CD8-positive, alpha-beta memory T cell (primary cell): ENCODE measurements at regions of chr16 and their contacts with region 1.

Region 1: DNA sequence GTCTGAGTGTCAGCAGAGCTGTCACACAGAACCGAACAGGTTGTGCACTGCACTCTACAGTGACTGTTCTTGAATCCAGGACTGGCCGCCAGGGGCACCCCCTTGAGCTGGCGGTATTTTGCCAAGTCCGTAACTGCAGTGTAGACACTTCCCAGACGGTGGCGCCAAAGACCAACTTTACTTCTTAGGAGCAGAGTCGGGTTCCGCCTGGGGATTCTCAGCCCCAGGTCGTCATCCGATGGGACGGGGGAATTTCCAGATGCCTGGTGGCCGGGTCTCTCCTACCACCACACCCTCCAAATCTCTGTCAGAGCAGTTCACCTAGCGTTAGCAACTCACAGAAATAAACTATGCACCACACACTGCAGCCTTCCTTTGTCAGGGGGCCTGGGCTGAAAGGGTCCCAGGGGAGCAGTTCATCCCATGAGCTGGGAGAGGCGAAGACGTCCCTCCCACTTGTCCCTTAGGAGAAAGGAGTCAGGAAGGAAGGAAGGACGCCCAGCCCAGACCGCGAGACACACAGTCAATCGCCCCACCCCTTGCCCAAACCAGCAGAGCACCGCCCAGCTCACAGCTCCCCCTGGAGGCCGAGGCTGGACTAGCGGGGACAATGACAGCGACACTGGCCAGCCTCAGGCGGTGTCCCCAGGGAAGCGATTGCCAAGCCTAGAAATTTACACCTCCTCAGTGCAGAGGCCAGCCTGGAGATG is 7.4 kb upstream of the RIPOR1 start:
- DNase-seq: peak; percentile 91 to 98 (median 96)
- H3K4me3 ChIP-seq: peak overlapping the region; percentile 91
- H3K4me3 Mint-ChIP-seq: peak overlapping the region; percentile 90 to 97 (median 93)
- H3K27ac ChIP-seq: peak overlapping the region; percentile 86
- H3K27ac Mint-ChIP-seq: peak overlapping the region; percentile 97 to 100 (median 99)
- H3K4me1 ChIP-seq: peaks cover 11% of the 10 kb centered on the region
- H3K4me1 Mint-ChIP-seq: peaks cover 16 to 18% (median 17%) of the 10 kb centered on the region in 3 donors
- H3K27me3 ChIP-seq: no peaks in the 10 kb centered on the region
- H3K27me3 Mint-ChIP-seq: peaks cover 0 to 4% of the 10 kb centered on the region in 2 donors

Region 2: DNA sequence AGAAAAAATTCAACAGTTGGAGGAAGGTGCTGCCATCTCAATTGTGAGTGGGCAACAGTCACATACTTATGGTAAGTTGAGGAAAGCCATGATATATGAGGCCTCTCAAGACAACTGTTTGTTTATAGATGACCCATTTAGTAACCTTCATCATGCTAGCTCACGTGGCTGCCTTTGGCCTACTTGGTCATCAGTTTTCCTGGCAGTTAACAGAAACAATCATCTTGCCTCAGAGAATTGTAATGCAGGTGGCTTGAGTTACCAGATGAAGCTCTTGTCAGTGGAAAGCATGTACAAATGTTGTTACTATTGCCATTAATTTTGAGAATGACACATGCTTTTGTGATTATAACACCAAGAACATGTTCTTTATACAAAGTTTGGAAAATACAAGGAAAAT is 142.6 kb before region 1 on chr16:
- CTCF ChIA-PET with region 1: no interaction called
- POLR2A ChIA-PET with region 1: no interaction called
- DNase-seq: no peak
- H3K4me3 ChIP-seq: no peak overlapping the region
- H3K4me3 Mint-ChIP-seq: no peak overlapping the region
- H3K27ac ChIP-seq: no peak overlapping the region
- H3K27ac Mint-ChIP-seq: no peak overlapping the region
- H3K4me1 ChIP-seq: no peaks in the 10 kb centered on the region
- H3K4me1 Mint-ChIP-seq: no peaks in the 10 kb centered on the region
- H3K27me3 ChIP-seq: no peaks in the 10 kb centered on the region
- H3K27me3 Mint-ChIP-seq: peaks cover 3 to 24% of the 10 kb centered on the region in 2 donors

Region 3: GRCh38 chr16:67393035-67393787 is 128.0 kb before region 1 on chr16 and contains the start of gene TPPP3:
- CTCF ChIA-PET with region 1: no interaction called
- POLR2A ChIA-PET with region 1: no interaction called
- DNase-seq: peak; percentile 13 to 58 (median 25)
- H3K4me3 ChIP-seq: no peak within 1 kb of the TSS
- H3K4me3 Mint-ChIP-seq: peak within 1 kb of the TSS; percentile 37 to 81 (median 67)
- H3K27ac ChIP-seq: no peak within 1 kb of the TSS
- H3K27ac Mint-ChIP-seq: peak within 1 kb of the TSS in 1 of 8 donors; percentile 15
- H3K4me1 ChIP-seq: peaks cover 8% of the 10 kb centered on the region
- H3K4me1 Mint-ChIP-seq: peaks cover 0 to 12% (median 4%) of the 10 kb centered on the region in 3 donors
- H3K27me3 ChIP-seq: peaks cover 19% of the 10 kb centered on the region
- H3K27me3 Mint-ChIP-seq: peaks cover 25 to 34% of the 10 kb centered on the region in 2 donors
- total RNA-seq, gene TPPP3: not detected

Region 4: DNA sequence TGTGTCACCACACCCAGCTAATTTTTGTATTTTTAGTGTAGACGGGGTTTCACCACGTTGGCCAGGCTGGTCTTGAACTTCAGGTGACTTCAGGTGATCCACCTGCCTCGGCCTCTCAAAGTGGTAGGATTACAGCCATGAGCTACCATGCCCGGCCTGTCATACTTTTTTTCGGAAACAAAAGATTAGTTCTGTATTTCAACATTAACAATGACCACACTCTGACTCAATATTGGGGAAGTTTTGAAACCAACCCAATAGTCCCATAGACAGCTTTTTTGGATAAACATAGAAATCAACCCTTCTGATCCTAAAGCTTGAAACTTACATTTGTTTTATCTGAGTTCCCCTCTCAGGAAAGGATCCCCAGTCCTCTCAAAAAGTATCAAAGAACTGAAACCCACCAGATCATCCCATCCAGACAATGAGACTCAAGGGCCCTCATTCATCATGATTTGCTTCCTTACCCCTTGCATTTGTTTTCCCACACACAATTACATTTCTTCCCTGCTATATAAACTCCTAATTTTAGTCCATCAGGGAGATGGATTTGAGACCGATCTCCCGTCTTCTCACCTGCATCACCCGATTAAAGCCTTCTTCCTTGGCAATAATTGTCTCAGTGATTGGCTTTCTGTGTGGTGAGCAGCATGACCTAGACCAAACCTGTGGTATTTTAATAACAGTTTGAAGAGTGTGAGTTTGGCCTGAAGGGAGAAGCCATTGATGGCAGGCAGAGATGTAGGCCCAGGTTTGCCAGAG is 30.7 kb before region 1 on chr16:
- CTCF ChIA-PET with region 1: interaction called, 168 read pairs
- POLR2A ChIA-PET with region 1: no interaction called
- DNase-seq: no peak
- H3K4me3 ChIP-seq: no peak overlapping the region
- H3K4me3 Mint-ChIP-seq: no peak overlapping the region
- H3K27ac ChIP-seq: no peak overlapping the region
- H3K27ac Mint-ChIP-seq: peak overlapping the region in 4 of 8 donors; percentile 47 to 75 (median 51)
- H3K4me1 ChIP-seq: peaks cover 7% of the 10 kb centered on the region
- H3K4me1 Mint-ChIP-seq: peaks cover 4 to 6% (median 5%) of the 10 kb centered on the region in 3 donors
- H3K27me3 ChIP-seq: no peaks in the 10 kb centered on the region
- H3K27me3 Mint-ChIP-seq: no peaks in the 10 kb centered on the region

Region 5: DNA sequence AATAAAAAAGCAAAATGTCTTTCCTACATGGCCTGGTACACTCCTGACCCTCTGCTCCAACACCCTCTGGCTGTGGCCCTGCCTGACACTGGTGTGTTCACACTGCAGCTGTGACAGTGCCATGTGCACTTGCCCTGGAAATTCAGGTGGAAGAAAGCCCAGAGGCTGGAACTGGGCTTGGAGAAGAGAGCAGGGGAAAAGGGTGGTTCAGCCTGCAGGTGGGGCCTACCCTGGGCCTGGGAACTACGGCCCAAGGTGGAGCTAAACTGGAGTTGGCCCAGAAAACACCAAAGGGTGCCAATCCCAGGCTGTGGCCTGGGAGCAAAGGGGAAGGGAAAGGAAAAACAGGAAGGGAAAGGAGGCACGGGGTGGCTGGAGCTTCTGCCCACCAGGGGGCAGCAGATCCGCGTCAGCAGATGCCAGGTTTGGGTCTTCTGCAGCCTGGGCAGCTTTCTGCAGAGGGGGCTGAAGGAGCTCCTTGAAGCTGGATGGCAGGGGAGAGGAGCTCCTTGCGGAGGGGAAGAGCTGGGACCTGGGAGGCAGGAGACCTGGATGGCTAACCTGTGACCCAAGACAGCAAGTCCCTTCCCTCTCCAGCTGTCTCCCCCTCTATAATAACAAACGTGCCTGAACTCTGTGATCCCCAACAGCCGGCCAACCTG is 25.6 kb after region 1 on chr16:
- CTCF ChIA-PET with region 1: interaction called, 125 read pairs
- POLR2A ChIA-PET with region 1: no interaction called
- DNase-seq: peak; percentile 64 to 79 (median 67)
- H3K4me3 ChIP-seq: peak overlapping the region; percentile 64
- H3K4me3 Mint-ChIP-seq: peak overlapping the region in 3 of 7 donors; percentile 13 to 66 (median 54)
- H3K27ac ChIP-seq: no peak overlapping the region
- H3K27ac Mint-ChIP-seq: peak overlapping the region; percentile 12 to 93 (median 79)
- H3K4me1 ChIP-seq: peaks cover 39% of the 10 kb centered on the region
- H3K4me1 Mint-ChIP-seq: peaks cover 30 to 55% (median 32%) of the 10 kb centered on the region in 3 donors
- H3K27me3 ChIP-seq: no peaks in the 10 kb centered on the region
- H3K27me3 Mint-ChIP-seq: no peaks in the 10 kb centered on the region

Region 6: GRCh38 chr16:67641779-67642708 is 120.8 kb after region 1 on chr16:
- CTCF ChIA-PET with region 1: interaction called, 89 read pairs
- POLR2A ChIA-PET with region 1: interaction called, 4 read pairs
- DNase-seq: no peak
- H3K4me3 ChIP-seq: no peak overlapping the region
- H3K4me3 Mint-ChIP-seq: peak overlapping the region in 1 of 7 donors; percentile 36
- H3K27ac ChIP-seq: no peak overlapping the region
- H3K27ac Mint-ChIP-seq: peak overlapping the region in 2 of 8 donors; percentile 10 to 42
- H3K4me1 ChIP-seq: peaks cover 22% of the 10 kb centered on the region
- H3K4me1 Mint-ChIP-seq: peaks cover 4 to 24% (median 11%) of the 10 kb centered on the region in 3 donors
- H3K27me3 ChIP-seq: no peaks in the 10 kb centered on the region
- H3K27me3 Mint-ChIP-seq: no peaks in the 10 kb centered on the region

Region 7: GRCh38 chr16:67672739-67673662 is 151.8 kb after region 1 on chr16:
- CTCF ChIA-PET with region 1: interaction called, 95 read pairs
- POLR2A ChIA-PET with region 1: no interaction called
- DNase-seq: peak in 2 of 5 donors; percentile 21 to 32
- H3K4me3 ChIP-seq: no peak overlapping the region
- H3K4me3 Mint-ChIP-seq: peak overlapping the region in 1 of 7 donors; percentile 43
- H3K27ac ChIP-seq: no peak overlapping the region
- H3K27ac Mint-ChIP-seq: peak overlapping the region in 4 of 8 donors; percentile 32 to 72 (median 54)
- H3K4me1 ChIP-seq: no peaks in the 10 kb centered on the region
- H3K4me1 Mint-ChIP-seq: peaks cover under 1 to 7% (median 1%) of the 10 kb centered on the region in 3 donors
- H3K27me3 ChIP-seq: no peaks in the 10 kb centered on the region
- H3K27me3 Mint-ChIP-seq: peaks cover 0 to 2% of the 10 kb centered on the region in 2 donors

Region 8: GRCh38 chr16:67883872-67884261 is 362.6 kb after region 1 on chr16:
- CTCF ChIA-PET with region 1: interaction called, 13 read pairs
- POLR2A ChIA-PET with region 1: no interaction called
- DNase-seq: peak; percentile 66 to 80 (median 67)
- H3K4me3 ChIP-seq: no peak overlapping the region
- H3K4me3 Mint-ChIP-seq: no peak overlapping the region
- H3K27ac ChIP-seq: no peak overlapping the region
- H3K27ac Mint-ChIP-seq: peak overlapping the region in 3 of 8 donors; percentile 17 to 82 (median 24)
- H3K4me1 ChIP-seq: no peaks in the 10 kb centered on the region
- H3K4me1 Mint-ChIP-seq: no peaks in the 10 kb centered on the region
- H3K27me3 ChIP-seq: no peaks in the 10 kb centered on the region
- H3K27me3 Mint-ChIP-seq: no peaks in the 10 kb centered on the region